Activated T-helper 2 cell treated with anti-CD3 and anti-CD28 coated beads, Interferon-gamma antibody, Interleukin-2, Interleukin-4, amounts not matched to agents 10 μg/mL and 5 μg/mL and 100 μg/mL, durations not matched to agents 14 hours and 24 hours and 36 hours (primary cell): ENCODE measurements at regions of chrX and their contacts with region 1.

Region 1: GRCh38 chrX:43882299-43882694 is at the start of gene MAOB:
- DNase-seq: peak; percentile 9
- H3K4me3 Mint-ChIP-seq: peak within 1 kb of the TSS; percentile 52
- H3K27ac Mint-ChIP-seq: no peak within 1 kb of the TSS
- H3K4me1 Mint-ChIP-seq: peaks cover 8% of the 10 kb centered on the region
- H3K27me3 Mint-ChIP-seq: peaks cover 2% of the 10 kb centered on the region
- total RNA-seq, gene MAOB: 10.3 and 11.6 TPM in 2 replicates

Region 2: GRCh38 chrX:43813898-43814297 is 68.4 kb before region 1 on chrX:
- intact Hi-C with region 1: loop called (anchors 10 kb)
- DNase-seq: peak; percentile 12
- H3K4me3 Mint-ChIP-seq: no peak overlapping the region
- H3K27ac Mint-ChIP-seq: peak overlapping the region; percentile 81
- H3K4me1 Mint-ChIP-seq: peaks cover 46% of the 10 kb centered on the region
- H3K27me3 Mint-ChIP-seq: no peaks in the 10 kb centered on the region

Region 3: GRCh38 chrX:43958529-43958928 is 76.2 kb after region 1 on chrX:
- intact Hi-C with region 1: no loop called
- DNase-seq: no peak
- H3K4me3 Mint-ChIP-seq: no peak overlapping the region
- H3K27ac Mint-ChIP-seq: no peak overlapping the region
- H3K4me1 Mint-ChIP-seq: peaks cover 9% of the 10 kb centered on the region
- H3K27me3 Mint-ChIP-seq: peaks cover 2% of the 10 kb centered on the region

Region 4: DNA sequence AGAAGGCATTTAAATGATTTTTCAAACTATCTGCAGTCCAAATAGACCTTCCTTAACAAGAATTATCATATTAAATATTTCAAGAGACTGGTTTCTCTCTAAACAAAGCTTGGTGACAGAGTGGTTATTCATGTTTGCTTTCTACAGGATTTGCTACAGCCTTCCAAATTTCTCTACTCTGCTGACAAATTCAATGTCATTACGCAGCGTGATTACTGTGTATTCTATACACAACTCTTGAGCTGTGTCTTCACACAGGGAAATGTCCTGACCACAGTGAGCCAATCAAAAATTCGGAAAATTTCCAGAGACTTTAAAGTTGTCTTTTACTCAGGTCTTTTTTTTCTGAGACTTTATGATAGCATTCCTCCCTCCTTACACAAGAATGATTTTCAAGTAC is 385.6 kb after region 1 on chrX:
- intact Hi-C with region 1: no loop called
- DNase-seq: no peak
- H3K4me3 Mint-ChIP-seq: no peak overlapping the region
- H3K27ac Mint-ChIP-seq: no peak overlapping the region
- H3K4me1 Mint-ChIP-seq: peaks cover 7% of the 10 kb centered on the region
- H3K27me3 Mint-ChIP-seq: peaks cover 3% of the 10 kb centered on the region